Activated CD4-positive, alpha-beta memory T cell treated with anti-CD3 and anti-CD28 coated beads, Interleukin-2, amount 10 ng/mL, durations not matched to agents 7 days and 5 days (primary cell): ENCODE measurements at regions of chr15 and their contacts with region 1.

Region 1: GRCh38 chr15:40367686-40368611 is 9.9 kb downstream of the DISP2 start:
- DNase-seq: peak; percentile 91
- H3K4me3 Mint-ChIP-seq: peak overlapping the region; percentile 77
- H3K27ac Mint-ChIP-seq: peak overlapping the region; percentile 56
- H3K4me1 Mint-ChIP-seq: peaks cover 20% of the 10 kb centered on the region
- H3K27me3 Mint-ChIP-seq: peaks cover 9% of the 10 kb centered on the region

Region 2: DNA sequence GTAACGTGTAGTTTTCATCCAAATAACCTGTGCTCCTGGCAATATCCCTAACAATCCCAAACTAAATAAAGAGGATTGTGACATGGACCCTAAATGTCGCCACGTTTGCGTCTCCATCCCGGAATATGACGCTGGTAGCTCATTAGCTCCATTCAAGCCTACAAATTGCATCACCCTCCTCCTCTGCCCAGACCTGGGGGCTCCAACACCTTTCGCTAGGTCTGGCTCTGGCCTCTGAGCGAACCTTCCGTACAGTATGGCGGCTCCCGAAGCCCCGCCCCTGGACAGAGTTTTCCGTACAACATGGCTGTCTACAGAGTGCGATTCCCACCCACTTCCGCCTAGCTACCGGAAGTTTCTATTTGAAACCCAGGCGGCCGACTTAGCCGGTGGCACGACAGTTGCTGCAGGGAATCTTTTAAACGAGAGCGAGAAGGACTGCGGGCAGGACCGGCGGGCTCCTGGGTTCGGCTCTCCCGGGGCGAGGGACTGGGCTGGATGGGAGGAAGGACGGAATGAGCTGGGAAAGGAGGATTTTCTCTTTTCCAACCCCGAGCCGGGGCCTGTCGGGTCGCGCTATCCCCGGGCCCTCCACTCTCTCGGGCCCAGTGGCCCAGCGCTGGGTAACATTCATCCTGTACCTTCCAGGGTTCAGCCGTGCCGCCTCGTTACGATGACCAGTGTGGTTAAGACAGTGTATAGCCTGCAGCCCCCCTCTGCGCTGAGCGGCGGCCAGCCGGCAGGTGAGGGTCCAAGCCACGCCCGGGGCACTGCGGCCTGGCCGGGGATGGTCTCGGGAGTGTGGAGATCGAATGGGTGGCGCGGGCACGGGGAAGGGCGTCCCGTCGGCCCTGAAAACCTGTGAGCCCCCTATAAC is 14.9 kb after region 1 on chr15 and contains the start of gene KNSTRN:
- CTCF ChIA-PET with region 1: interaction called, 19 read pairs
- POLR2A ChIA-PET with region 1: interaction called, 22 read pairs
- DNase-seq: peak; percentile 94
- H3K4me3 Mint-ChIP-seq: peak within 1 kb of the TSS; percentile 98
- H3K27ac Mint-ChIP-seq: peak within 1 kb of the TSS; percentile 82
- H3K4me1 Mint-ChIP-seq: peaks cover 32% of the 10 kb centered on the region
- H3K27me3 Mint-ChIP-seq: peaks cover 5% of the 10 kb centered on the region
- total RNA-seq, gene KNSTRN: 54.2 to 54.3 TPM

Region 3: DNA sequence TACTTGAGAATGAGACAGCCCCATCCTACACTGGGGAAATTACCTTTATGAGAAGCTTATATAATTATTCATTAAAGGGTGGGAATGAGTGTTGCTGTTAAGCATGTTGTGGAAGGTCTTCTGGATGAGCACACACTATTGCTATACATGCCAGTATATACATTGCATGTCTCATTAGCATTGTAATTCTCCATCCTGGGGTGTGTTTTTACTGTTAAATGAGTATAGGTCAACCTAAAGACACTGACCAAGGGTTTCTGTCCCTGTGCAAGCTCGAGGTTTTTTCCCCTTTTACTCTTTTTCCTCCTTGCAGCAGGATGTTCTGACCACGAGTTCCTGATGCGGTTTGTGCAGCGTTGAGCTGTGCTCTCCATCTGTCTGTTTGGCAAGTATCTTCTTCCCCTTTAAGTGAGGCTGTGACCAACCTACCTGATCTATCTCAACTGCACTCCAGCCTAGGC is 30.5 kb after region 1 on chr15:
- CTCF ChIA-PET with region 1: interaction called, 6 read pairs
- POLR2A ChIA-PET with region 1: interaction called, 14 read pairs
- DNase-seq: peak; percentile 39
- H3K4me3 Mint-ChIP-seq: peak overlapping the region; percentile 29
- H3K27ac Mint-ChIP-seq: peak overlapping the region; percentile 32
- H3K4me1 Mint-ChIP-seq: peaks cover 32% of the 10 kb centered on the region
- H3K27me3 Mint-ChIP-seq: no peaks in the 10 kb centered on the region

Region 4: DNA sequence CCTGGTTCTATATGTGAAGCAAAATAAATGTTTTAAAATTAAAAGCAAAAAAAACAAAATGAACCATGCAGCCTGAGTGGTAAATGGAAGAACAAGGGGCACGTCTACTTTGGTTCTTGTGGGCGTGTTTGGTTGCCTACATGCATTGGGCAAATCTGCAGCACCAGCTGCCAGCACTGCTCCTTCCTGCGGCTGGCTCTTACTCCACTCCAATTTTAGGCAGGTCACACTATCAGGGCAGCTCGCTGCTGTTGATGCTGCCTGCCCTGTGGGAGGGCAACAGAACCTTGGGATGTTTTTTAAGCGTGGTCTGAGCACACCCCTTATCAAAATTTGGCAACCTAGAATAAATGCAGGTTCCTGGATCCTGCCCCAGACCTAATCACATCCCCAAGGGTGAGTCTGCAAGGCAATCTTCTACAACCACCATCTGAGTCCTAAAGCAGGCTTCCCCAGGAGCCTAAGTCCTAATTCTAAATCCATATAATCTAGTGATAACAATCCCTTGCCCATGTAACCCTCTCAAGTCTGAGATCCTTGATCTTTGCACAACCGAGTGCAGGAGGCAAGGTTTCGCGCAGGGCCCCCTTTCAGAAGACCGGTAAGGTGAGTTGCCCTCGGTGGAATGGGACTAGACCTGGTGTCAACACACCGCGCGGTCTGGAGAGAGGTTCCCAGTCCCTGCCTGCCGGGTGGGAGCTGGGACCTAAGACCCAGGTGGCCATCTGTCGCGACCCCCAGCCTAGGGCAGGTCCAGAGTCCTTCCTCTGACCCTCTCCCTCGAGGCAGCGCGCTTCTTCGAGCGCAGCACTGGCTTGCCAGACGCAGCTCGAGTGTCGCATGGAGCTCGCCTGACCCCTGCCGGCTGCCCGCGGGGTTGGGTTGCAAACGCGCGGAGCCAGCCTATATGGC is 53.6 kb after region 1 on chr15:
- CTCF ChIA-PET with region 1: interaction called, 39 read pairs
- POLR2A ChIA-PET with region 1: interaction called, 10 read pairs
- DNase-seq: peak; percentile 84
- H3K4me3 Mint-ChIP-seq: no peak overlapping the region
- H3K27ac Mint-ChIP-seq: no peak overlapping the region
- H3K4me1 Mint-ChIP-seq: peaks cover 2% of the 10 kb centered on the region
- H3K27me3 Mint-ChIP-seq: peaks cover 1% of the 10 kb centered on the region